ENCODE measurements at regions of chr20 and their contacts with region 1.

Region 1: GRCh38 chr20:32207626-32208498 is at the starts of genes PLAGL2 and POFUT1:
- DNase-seq: peak; percentile 93
- ATAC-seq: peak; percentile 98
- total RNA-seq, gene PLAGL2: 7.9 TPM
- total RNA-seq, gene POFUT1: 27.8 TPM

Region 2: DNA sequence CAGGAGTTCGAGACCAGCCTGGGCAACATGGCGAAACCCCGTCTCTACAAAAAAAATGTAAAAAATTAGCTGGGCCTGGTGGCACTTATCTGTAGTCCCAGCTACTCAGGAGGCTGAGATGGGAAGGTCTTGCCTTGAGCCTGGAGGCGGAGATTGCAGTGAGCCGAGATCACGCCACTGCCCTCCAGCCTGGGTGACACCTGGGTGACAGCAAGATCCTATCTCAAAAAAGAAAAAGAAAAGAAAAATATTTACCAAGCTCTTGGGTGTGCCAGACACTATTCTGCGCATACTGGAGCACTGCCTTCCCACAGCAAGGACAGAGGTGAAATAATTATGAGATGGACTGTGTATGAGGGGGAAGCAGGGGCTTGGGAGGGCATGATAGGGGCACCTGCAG is 19.4 kb after region 1 on chr20:
- intact Hi-C with region 1: no loop called
- DNase-seq: no peak
- ATAC-seq: no peak

Region 3: GRCh38 chr20:32445539-32446273 is 237.8 kb after region 1 on chr20:
- intact Hi-C with region 1: loop called (anchors 10 kb)
- DNase-seq: peak; percentile 58
- ATAC-seq: peak; percentile 29

Region 4: DNA sequence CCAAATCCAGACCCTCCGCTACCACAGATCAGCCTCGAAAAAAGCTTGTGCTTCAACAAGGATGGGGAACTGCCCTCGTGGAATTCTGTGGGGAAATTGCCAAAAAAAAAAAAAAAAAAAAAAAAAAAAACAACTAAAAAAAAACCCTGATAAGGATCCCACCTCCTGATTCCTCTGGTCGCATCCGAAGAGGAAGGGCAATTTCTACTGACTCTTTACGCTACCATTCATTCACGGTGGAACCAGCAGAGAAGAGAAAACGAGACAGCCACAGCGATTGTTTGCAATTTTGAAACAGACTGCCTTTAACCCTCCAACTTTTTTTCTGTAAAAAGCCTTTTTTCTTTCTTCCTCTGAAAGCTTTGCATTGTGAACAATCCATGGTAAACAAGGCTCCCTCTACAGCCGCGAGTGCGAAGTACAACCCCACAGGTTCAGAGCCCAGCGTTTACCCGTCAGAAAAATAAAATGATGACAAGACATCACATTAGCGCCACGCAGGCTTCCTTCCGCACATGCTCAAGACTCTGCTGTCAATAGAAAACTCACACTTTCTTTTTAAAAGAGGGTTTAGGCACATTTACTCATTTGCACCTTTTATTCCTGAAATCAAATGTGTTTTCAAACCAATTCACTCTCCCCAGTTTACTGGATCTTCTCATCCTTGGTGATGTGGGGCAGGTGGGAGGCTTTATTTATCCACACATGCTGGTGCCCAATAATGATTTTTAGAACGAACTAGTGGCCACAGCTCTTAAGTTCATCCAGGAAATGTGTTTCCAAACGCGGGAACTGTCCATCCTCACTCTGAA is 277.3 kb after region 1 on chr20:
- intact Hi-C with region 1: loop called (anchors 10 kb)
- DNase-seq: peak; percentile 89
- ATAC-seq: peak; percentile 76